OCI-LY7 (cell line): ENCODE measurements at regions of chr2 and their contacts with region 1.

Region 1: DNA sequence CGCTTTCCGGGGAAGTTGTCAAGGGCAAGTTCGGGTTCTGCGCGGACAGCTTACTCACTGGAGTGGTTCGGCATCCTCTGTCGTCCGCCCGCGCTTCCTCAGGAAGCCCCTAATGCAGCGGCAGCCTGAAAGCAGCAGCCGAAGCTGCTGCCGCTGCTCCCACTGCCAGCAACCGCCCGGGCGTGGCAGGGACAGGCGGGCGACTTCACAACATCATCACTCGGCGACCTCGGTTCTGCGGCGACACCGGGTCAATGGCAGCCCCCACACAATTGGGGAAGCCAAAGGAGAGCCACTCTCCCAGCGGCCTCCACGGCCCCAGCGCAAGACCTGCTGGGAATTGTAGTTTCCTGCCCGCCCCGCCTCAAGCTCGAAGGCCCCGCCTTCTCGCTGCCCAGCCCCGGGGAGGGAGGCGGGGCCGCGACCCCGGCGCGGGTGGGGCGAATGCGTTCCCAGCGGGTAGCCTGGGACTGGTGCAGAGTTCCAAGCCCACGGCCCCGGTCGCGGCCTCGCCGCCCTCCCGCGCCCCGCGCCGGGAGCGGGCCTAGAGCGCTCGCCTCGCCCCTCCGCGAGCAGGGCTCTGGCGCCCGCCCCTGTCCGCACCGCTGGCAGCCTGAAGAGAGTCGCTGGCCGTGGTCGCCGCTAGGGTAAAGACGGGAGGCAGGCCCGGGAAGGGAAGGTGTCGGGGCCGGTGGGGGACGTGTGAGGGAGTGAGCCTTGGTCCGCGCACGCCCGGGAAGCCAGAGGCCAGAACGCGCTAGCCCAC is at the starts of genes STRADB and TRAK2:
- DNase-seq: peak; percentile 96
- H3K4me3 ChIP-seq: peak within 1 kb of the TSS; percentile 99
- H3K27ac ChIP-seq: peak within 1 kb of the TSS; percentile 80
- H3K4me1 ChIP-seq: peaks cover 14% of the 10 kb centered on the region
- CTCF ChIP-seq: peak; percentile 25; the same call in 1 of the 2 replicates
- total RNA-seq, gene STRADB: 8.4 and 11.9 TPM in 2 replicates
- total RNA-seq, gene TRAK2: 4.9 and 7.1 TPM in 2 replicates

Region 2: DNA sequence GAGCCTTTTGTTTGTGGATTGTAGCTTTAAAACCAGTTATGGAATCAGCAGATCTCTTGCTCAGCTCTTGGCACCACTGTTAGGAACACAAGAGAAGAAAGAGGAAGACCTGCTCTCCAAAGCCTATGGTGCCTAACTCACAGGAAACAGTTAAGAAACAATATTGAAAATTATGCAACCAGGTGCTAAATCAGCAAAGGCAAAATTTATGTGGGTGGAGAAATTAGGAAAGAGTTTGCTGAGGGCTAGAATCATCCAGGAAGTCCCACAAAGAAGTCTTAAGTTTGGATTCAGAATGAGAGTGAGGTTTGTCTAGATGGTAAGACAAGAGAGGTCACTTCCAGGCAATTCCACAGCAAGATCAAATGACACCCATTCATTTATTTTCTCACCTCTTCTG is 816.2 kb before region 1 on chr2:
- CTCF ChIA-PET with region 1: no interaction called
- POLR2A ChIA-PET with region 1: no interaction called
- intact Hi-C with region 1: no loop called
- DNase-seq: no peak
- H3K4me3 ChIP-seq: no peak overlapping the region
- H3K27ac ChIP-seq: no peak overlapping the region
- H3K4me1 ChIP-seq: no peaks in the 10 kb centered on the region
- CTCF ChIP-seq: no peak

Region 3: GRCh38 chr2:201257956-201258665 is 193.4 kb before region 1 on chr2:
- CTCF ChIA-PET with region 1: no interaction called
- POLR2A ChIA-PET with region 1: interaction called, 10 read pairs
- intact Hi-C with region 1: loop called (anchors 2 kb)
- DNase-seq: peak; percentile 84
- H3K4me3 ChIP-seq: peak overlapping the region; percentile 69
- H3K27ac ChIP-seq: peak overlapping the region; percentile 93
- H3K4me1 ChIP-seq: peaks cover 47% of the 10 kb centered on the region
- CTCF ChIP-seq: peak; percentile 18; the same call in 1 of the 2 replicates

Region 4: GRCh38 chr2:201440182-201440581 is 11.3 kb before region 1 on chr2:
- CTCF ChIA-PET with region 1: no interaction called
- POLR2A ChIA-PET with region 1: interaction called, 22 read pairs
- intact Hi-C with region 1: no loop called
- DNase-seq: no peak
- H3K4me3 ChIP-seq: no peak overlapping the region
- H3K27ac ChIP-seq: no peak overlapping the region
- H3K4me1 ChIP-seq: peaks cover 12% of the 10 kb centered on the region
- CTCF ChIP-seq: no peak

Region 5: DNA sequence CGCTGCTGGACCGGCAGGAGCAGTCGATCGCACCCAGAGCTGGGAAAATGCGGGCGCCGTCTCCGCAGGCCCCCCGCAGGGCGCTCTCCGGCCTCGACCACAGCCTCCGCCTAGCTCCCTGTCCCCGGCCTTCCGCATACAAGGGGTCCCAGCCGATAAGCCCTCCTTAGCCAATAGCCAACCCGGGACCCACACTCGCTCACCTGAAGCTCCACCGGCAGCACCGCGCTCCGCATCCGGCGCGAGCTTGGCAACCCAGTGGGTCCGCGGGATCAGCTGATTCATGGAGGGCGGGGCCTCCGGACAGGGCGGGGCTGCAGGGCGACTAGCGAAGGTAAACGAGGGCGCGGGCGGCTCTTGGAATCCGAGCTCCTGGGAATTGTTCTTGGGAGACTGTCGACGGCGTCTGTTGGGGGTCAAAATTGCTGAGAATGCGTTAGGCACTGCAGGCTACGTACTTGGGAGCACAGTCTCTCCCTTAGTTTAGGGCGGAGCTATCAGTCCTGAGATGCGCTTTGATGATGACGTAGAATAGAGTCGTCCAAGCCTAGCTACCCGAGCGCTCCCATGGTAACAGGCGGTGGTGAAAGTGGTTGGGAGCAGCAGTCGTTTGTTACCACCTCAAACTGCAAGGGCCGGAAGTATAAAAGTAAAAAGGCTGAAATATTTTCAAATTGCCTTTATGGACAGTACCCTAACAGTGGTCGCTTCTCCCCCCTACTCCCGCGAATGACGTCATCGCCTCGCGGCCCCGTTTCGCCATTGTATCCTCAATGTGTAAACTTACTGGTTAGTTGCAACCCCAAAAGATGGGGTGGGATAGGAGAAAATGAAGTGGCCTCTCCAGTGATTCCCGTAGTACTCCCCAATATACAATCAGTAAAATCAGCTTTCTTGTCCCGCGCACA is 329.5 kb after region 1 on chr2 and contains the start of gene ALS2:
- CTCF ChIA-PET with region 1: no interaction called
- POLR2A ChIA-PET with region 1: no interaction called
- intact Hi-C with region 1: loop called (anchors 1 kb)
- DNase-seq: peak; percentile 94
- H3K4me3 ChIP-seq: peak within 1 kb of the TSS; percentile 84
- H3K27ac ChIP-seq: peak within 1 kb of the TSS; percentile 47
- H3K4me1 ChIP-seq: peaks cover 22% of the 10 kb centered on the region
- CTCF ChIP-seq: no peak
- total RNA-seq, gene ALS2: 8.3 and 9.6 TPM in 2 replicates